ENCODE measurements at regions of chr16 and their contacts with region 1.

Region 1: GRCh38 chr16:89873972-89874689 is 739 bp downstream of the TCF25 start:
- DNase-seq: peak; percentile 99
- ATAC-seq: peak; percentile 78
- H3K4me3 Mint-ChIP-seq: peak overlapping the region; percentile 87
- H3K27ac Mint-ChIP-seq: peak overlapping the region; percentile 95
- H3K4me1 Mint-ChIP-seq: peaks cover 14% of the 10 kb centered on the region
- H3K27me3 Mint-ChIP-seq: no peaks in the 10 kb centered on the region

Region 2: GRCh38 chr16:88803264-88803987 is 1070.7 kb before region 1 on chr16 and contains the start of gene CDT1:
- CTCF ChIA-PET with region 1: no interaction called
- POLR2A ChIA-PET with region 1: no interaction called
- intact Hi-C with region 1: loop called in 1 of 2 experiments (anchors 5 kb)
- DNase-seq: peak; percentile 90
- ATAC-seq: peak; percentile 32
- H3K4me3 Mint-ChIP-seq: peak within 1 kb of the TSS; percentile 83
- H3K27ac Mint-ChIP-seq: peak within 1 kb of the TSS; percentile 94
- H3K4me1 Mint-ChIP-seq: peaks cover 24% of the 10 kb centered on the region
- H3K27me3 Mint-ChIP-seq: no peaks in the 10 kb centered on the region
- total RNA-seq, gene CDT1: 136 to 182 TPM

Region 3: DNA sequence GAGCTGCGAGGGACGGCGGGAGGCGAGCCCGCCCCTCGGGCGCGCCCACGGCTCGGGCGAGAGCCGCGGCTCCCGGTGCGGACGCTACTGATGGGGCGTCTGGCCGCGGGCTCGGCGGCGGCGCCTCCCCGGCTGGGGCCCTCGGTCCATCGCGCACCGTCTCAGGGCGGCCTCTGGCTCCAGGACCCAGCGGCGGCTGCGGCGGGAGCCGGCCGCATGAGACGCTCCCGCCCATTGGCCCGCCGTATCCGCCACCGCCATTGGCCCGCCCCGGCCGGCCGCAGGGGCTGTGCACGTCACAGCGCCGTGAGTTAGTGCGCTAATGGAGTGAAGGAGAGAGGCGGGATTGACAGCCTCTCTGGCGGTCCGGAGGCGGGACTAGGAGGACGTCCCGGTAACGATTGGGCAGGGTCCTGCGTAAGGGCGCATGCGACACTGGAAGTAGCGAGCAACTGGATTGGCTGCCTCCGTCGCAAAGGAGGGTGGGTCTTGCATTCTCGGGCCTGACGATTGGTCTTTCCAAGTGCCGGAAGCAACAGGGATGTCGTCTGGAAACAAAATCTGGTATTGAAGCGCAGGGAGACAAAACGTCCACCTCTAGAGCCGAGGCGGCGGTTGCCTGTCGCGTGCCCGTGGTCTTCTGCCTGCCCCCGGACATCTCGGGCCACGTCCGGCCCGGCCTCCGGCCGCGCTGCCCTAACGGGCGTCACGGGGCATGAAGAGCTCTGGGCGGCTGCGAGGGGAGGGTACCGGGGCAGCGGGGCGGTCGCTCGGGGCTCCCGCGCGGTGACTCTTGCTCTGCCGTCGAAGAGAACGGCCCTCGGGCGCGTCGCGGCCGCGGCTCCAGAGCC is 383.5 kb before region 1 on chr16 and contains the start of gene ANKRD11:
- CTCF ChIA-PET with region 1: no interaction called
- POLR2A ChIA-PET with region 1: no interaction called
- intact Hi-C with region 1: loop called in 1 of 2 experiments (anchors 1 kb)
- DNase-seq: peak; percentile 99
- ATAC-seq: peak; percentile 93
- H3K4me3 Mint-ChIP-seq: peak within 1 kb of the TSS; percentile 87
- H3K27ac Mint-ChIP-seq: peak within 1 kb of the TSS; percentile 92
- H3K4me1 Mint-ChIP-seq: peaks cover 44% of the 10 kb centered on the region
- H3K27me3 Mint-ChIP-seq: no peaks in the 10 kb centered on the region
- total RNA-seq, gene ANKRD11: 144 to 145 TPM

Region 4: DNA sequence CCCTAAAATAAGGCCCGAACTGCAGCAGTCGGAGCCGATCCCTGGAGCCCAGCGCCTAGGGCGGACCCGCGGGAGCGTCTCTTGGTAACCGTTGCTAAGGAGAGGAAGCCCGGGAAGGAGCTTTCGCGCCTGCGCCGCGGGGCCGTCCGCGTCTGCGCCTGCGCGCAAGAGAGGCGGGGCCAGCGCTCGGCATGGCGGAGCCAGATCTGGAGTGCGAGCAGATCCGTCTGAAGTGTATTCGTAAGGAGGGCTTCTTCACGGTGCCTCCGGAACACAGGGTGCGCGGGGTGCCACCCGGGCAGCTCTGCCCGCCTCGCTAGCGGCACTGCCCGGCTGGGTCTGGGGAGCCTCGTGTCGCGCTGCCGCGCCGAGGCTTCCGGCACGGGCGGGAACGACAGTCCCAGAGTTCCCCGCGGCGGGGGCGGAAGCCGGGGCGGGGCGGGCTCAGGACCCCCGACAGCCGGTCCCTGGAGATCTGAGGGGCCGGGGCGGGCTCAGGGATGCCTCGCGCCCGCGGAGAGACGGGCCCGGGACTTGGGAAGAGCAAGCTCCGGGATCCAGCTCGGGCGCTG is 187.5 kb before region 1 on chr16 and contains the start of gene CDK10:
- CTCF ChIA-PET with region 1: no interaction called
- POLR2A ChIA-PET with region 1: no interaction called
- intact Hi-C with region 1: loop called in 1 of 2 experiments (anchors 1 kb)
- DNase-seq: peak; percentile 92
- ATAC-seq: peak; percentile 90
- H3K4me3 Mint-ChIP-seq: peak within 1 kb of the TSS; percentile 86
- H3K27ac Mint-ChIP-seq: peak within 1 kb of the TSS; percentile 88
- H3K4me1 Mint-ChIP-seq: peaks cover 14% of the 10 kb centered on the region
- H3K27me3 Mint-ChIP-seq: no peaks in the 10 kb centered on the region
- total RNA-seq, gene CDK10: 78.1 to 89.8 TPM

Region 5: DNA sequence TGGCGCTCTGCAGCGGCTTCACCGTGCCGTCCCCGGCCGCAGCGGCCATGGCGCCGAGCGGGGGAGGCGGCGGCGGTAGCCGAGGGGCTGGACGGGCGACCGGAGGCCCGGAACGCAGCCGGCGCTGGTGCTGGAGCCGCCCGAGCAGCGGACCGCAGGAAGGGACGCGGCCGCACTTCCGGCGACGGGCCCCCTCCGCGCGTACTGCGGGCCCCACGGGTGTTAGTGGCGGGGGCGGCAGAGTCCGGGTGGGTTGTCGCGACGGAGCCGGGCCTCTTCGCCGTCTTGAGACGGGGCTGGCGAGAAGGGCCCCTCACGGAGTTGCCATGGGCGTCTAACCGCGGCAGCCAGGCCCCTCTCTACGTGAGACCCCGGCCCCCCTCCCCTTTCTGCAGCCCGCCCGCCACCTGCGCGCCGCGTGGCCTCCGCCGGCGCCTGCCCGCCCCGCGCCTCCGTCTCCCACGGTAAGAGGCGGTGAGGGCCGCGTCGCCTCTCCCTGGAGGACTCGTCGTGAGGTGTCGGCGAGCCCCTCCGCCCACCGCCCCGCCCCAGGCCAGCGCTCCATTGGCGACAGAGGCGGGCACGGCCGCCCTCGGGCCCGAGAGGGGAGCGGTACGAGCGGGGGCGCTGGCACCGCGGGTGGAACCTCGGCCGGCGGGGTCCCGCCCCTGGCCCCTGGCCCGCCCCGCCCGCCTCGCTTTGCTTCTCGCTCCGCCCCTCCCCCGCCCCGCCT is 153.2 kb before region 1 on chr16 and contains the starts of genes VPS9D1 and ZNF276:
- CTCF ChIA-PET with region 1: no interaction called
- POLR2A ChIA-PET with region 1: no interaction called
- intact Hi-C with region 1: loop called (anchors 1 kb)
- DNase-seq: peak; percentile 92
- ATAC-seq: peak; percentile 49
- H3K4me3 Mint-ChIP-seq: peak within 1 kb of the TSS; percentile 85
- H3K27ac Mint-ChIP-seq: peak within 1 kb of the TSS; percentile 84
- H3K4me1 Mint-ChIP-seq: peaks cover 40% of the 10 kb centered on the region
- H3K27me3 Mint-ChIP-seq: no peaks in the 10 kb centered on the region
- total RNA-seq, gene VPS9D1: 2.0 to 2.6 TPM
- total RNA-seq, gene ZNF276: 21.3 to 24.8 TPM

Region 6: GRCh38 chr16:89860747-89861304 is 13.3 kb before region 1 on chr16:
- CTCF ChIA-PET with region 1: interaction called, 16 read pairs
- POLR2A ChIA-PET with region 1: interaction called, 4 read pairs
- intact Hi-C with region 1: no loop called
- DNase-seq: peak; percentile 84
- ATAC-seq: peak; percentile 81
- H3K4me3 Mint-ChIP-seq: no peak overlapping the region
- H3K27ac Mint-ChIP-seq: no peak overlapping the region
- H3K4me1 Mint-ChIP-seq: peaks cover 28% of the 10 kb centered on the region
- H3K27me3 Mint-ChIP-seq: no peaks in the 10 kb centered on the region

Region 7: GRCh38 chr16:89972244-89973234 is 98.4 kb after region 1 on chr16:
- CTCF ChIA-PET with region 1: interaction called, 3 read pairs
- POLR2A ChIA-PET with region 1: interaction called, 4 read pairs
- intact Hi-C with region 1: loop called in 1 of 2 experiments (anchors 1 kb)
- DNase-seq: peak; percentile 94
- ATAC-seq: peak; percentile 94
- H3K4me3 Mint-ChIP-seq: peak overlapping the region; percentile 99
- H3K27ac Mint-ChIP-seq: peak overlapping the region; percentile 95
- H3K4me1 Mint-ChIP-seq: peaks cover 32% of the 10 kb centered on the region
- H3K27me3 Mint-ChIP-seq: no peaks in the 10 kb centered on the region